Common myeloid progenitor, CD34-positive (primary cell): ENCODE measurements at regions of chr16 and their contacts with region 1.

Region 1: DNA sequence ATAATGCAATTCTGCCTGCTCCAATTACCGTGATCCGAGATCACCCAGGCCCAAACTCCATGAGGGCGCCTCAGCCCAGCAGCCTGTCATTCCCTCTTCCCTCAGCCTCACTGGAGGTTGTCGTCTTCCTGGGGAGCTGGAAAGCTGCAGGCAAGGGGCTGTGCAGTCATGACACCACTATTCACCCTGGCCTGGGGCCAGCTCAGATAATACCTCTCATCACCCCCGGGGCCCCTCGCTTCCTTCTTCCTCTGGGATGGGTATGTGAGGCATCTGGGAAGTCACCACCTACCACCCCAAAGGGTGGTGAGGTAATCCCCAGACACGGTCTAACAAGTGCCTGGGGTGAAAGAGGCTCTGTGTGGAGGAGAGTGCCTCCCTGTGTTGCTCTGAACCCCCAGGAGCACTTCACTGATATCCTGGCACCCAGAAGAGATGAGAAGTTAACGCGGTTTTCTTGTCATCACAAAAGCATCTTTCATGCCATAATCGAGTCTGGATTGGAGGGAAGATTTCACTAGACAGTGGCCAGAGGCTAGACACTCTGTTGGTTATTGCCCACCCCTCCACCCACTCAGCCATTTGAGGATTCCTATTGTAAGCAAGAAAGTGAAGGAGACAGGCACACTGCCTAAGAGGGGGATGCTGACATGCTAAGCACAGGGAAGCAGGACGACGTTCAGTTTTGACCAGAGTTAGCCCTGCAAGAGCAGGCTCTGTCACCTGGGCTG is 18.4 kb downstream of the CFAP20 start:
- DNase-seq: peak in 1 of 3 donors; percentile 28
- H3K4me3 ChIP-seq: no peak overlapping the region
- H3K27ac ChIP-seq: no peak overlapping the region
- H3K4me1 ChIP-seq: peaks cover 0 to 29% (median 22%) of the 10 kb centered on the region in 4 experiments
- H3K27me3 ChIP-seq: no peaks in the 10 kb centered on the region

Region 2: GRCh38 chr16:58098207-58099096 is 12.3 kb before region 1 on chr16:
- CTCF ChIA-PET with region 1: interaction called, 17 read pairs
- POLR2A ChIA-PET with region 1: no interaction called
- DNase-seq: no peak
- H3K4me3 ChIP-seq: no peak overlapping the region
- H3K27ac ChIP-seq: no peak overlapping the region
- H3K4me1 ChIP-seq: peaks cover 0 to 13% (median 10%) of the 10 kb centered on the region in 4 experiments
- H3K27me3 ChIP-seq: no peaks in the 10 kb centered on the region